Posterior cingulate gyrus (tissue), 11 donors: ENCODE measurements at regions of chr14 and their contacts with region 1.

Region 1: DNA sequence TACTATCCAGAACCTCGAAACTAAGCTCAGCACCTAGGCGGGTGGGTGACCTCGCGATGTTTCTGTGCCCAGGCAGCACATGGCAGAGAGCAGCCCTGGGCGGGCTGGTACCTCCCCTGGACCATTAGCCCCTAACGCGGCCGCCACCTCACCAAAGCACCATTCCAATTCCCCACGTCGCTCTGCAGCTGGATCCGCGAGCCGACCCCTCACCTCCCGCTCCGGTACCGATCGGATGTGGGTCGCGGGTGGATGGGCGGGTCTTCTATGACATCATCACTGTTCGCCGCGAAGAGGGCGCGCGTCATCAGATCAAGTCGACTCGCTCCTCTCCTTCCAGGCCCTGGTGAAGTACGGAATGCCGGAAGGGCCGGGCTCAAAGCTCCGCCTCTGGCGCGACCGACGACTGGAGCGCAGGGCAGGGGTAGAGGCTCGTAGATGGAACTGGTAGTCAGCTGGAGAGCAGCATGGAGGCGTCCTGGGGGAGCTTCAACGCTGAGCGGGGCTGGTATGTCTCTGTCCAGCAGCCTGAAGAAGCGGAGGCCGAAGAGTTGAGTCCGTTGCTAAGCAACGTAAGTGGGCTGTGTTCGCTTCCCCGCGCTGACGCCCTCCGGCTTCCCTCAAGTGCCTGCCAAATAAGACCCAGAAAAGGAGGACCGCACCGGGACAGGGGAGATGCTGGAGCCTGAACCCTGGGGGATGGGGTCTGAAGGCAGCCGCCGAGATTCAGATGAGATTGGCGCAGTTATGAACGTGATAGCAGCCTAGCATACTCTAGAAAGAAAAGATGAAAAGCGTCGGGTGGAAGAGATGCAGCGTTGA is at the starts of genes SLC38A6 and TRMT5:
- DNase-seq: peak; percentile 91 to 99 (median 94)

Region 2: DNA sequence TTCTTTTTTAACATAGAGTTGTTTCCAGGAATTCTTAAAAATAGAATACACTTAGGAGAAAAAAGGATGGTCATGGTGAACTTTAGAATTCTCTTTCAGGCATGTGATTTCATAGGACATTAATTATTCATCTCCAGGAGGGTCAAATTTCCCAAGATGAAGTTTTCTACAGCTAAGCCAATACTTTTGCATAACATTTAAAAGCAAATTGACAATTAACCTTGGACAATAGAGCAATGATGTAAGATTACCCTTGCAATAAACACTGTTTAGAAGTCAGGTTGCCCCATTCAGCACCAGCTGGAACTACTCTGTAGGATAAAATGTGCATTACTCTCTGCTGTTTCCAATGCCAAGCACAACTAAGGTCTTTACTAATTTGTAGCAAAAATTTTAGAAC is 381.3 kb before region 1 on chr14:
- intact Hi-C with region 1: no loop called
- DNase-seq: no peak

Region 3: DNA sequence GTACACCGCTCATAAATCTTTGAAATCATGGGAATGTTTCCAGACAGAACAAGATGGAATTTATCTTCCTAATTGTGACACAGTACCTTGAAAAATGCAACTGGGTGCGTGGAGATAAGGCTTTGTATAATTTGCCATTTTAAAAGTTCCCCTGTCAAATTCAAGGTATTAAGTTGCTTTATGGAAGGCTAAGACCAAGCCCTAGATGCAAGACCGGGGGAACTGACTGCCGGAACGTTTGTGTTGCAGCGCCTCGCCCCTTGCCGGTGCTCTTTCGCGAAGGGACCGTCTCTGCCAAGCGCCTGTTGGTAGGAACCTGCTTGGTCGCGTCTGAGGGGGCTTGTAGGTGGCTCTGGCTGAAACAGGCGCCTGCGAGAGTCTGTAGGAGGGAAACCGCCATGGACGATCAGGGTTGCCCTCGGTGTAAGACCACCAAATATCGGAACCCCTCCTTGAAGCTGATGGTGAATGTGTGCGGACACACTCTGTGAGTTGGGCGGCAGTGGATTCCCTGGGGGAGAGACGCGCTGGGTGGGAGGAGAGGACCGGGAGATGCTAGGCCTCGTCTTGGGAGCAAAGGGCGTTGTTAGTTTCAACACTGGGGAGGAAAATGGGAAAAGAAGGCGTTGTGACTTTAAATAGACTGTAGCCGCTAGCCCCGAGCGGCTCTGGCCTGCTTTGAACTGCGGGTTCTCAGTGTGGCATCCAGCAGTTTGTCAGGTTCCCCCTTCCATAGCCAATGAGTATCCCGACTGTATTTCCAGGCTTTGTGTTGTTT is 246.4 kb before region 1 on chr14 and contains the start of gene MNAT1:
- intact Hi-C with region 1: loop called (anchors 1 kb)
- DNase-seq: peak; percentile 78 to 97 (median 83)

Region 4: DNA sequence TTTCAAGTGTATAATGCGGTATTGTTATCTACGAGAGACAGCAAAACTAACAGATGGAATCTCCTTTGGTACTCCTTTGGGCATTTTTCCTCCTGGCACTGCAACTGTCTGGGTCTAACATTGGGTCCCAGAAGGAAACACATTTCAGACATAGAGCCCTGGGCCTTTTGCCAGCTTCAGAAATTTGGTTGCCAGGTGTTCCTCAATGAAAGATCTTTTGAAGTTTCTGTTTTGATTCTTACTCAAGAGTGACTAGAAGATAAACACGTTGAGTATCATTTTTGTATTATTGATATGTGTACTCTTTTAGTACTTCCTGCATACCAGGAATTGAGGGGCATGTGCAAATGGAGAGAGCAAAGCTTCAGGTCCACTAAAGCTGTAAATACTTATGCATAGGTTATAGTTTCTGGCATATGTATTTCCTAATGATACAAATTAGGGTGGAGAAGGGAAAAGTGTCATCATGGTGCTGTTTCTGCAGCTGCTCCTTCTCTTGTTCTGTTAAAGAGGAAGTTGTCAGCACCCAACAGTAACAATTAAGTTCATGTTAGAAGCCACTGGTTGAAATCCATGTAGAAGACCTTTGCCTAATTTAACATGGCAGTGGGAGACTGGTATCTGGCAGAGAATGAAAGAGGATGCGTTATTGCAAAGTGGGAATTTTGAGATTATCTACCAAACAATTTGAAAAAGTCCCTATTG is 53.5 kb after region 1 on chr14:
- intact Hi-C with region 1: no loop called
- DNase-seq: no peak